ENCODE measurements at regions of chr12 and their contacts with region 1.

Region 1: GRCh38 chr12:42023733-42024494 is 120.8 kb downstream of the GXYLT1 start:
- DNase-seq: peak; percentile 74 to 84 (median 75)
- H3K4me3 ChIP-seq: peak overlapping the region in 2 of 4 donors; percentile 33 to 55
- H3K27ac ChIP-seq: no peak overlapping the region
- H3K4me1 ChIP-seq: no peaks in the 10 kb centered on the region
- H3K27me3 ChIP-seq: no peaks in the 10 kb centered on the region
- CTCF ChIP-seq: peak in 5 of 6 experiments; percentile 78 to 96 (median 85)
- POLR2A ChIP-seq: no peak

Region 2: DNA sequence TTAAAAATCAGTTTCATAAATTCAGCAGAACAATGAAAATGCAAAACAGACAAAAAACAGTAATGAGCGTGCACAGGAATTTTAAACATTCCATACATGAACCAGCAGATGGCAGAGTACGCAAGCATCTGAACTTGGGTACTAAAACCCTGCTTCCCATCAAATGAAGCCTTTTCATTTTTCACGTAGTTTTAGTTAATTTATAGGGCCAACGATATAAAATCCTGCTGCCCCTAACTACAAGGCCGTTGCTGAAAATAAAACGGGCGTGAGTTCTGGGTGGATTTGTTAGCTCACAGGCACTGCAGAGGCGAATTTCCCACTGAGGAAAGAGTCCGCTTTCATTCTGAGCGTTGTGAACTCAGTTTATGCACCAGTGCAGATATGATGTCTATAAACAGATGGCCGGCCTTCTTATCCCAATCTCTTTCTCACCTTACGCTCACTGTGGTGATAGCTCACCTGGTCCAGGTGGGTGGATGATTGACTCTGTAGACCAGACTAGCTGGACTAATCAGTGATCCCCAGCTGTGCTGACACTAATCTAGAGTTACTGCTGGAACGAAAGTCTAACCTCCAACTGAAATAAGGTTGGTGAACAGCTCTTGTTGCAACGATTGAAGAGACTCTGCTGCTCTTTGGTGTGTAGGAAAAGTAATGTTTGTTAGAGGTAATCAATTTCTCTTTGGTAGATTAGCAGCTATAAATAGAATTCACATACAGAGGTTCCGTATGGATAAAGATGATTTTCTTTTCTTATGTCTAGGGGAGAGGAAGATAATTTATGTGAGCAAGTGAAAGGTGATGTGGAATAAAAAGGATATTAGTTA is 746.6 kb before region 1 on chr12:
- intact Hi-C with region 1: loop called in 1 of 2 experiments (anchors 10 kb)
- DNase-seq: peak in 4 of 7 donors; percentile 19 to 31 (median 22)
- H3K4me3 ChIP-seq: no peak overlapping the region
- H3K27ac ChIP-seq: no peak overlapping the region
- H3K4me1 ChIP-seq: peaks cover 0 to 8% of the 10 kb centered on the region in 2 donors
- H3K27me3 ChIP-seq: no peaks in the 10 kb centered on the region
- CTCF ChIP-seq: peak; percentile 30 to 66 (median 49)
- POLR2A ChIP-seq: no peak

Region 3: DNA sequence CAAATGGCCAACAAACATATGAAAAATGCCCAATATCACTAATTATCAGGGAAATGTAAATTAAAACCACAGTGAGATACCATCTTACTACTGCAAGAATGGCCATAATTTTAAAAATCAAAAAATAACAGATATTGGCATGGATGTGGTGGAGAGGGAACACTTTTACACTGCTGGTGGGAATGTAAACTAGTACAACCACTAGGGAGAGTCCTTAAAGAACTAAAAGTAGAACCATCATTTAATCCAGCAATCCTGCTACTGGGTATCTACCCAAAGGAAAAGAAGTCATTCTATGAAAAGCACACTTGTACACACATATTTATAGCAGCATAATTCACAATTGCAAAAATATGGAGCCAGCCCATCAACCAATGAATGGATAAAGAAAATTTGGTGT is 338.9 kb before region 1 on chr12:
- intact Hi-C with region 1: loop called in 1 of 2 experiments (anchors 10 kb)
- DNase-seq: no peak
- H3K4me3 ChIP-seq: no peak overlapping the region
- H3K27ac ChIP-seq: no peak overlapping the region
- H3K4me1 ChIP-seq: no peaks in the 10 kb centered on the region
- H3K27me3 ChIP-seq: no peaks in the 10 kb centered on the region
- CTCF ChIP-seq: peak in 3 of 6 experiments; percentile 48 to 64 (median 59)
- POLR2A ChIP-seq: no peak